Activated naive CD4-positive, alpha-beta T cell treated with anti-CD3 and anti-CD28 coated beads for 36 hours (primary cell): ENCODE measurements at regions of chr5 and their contacts with region 1.

Region 1: DNA sequence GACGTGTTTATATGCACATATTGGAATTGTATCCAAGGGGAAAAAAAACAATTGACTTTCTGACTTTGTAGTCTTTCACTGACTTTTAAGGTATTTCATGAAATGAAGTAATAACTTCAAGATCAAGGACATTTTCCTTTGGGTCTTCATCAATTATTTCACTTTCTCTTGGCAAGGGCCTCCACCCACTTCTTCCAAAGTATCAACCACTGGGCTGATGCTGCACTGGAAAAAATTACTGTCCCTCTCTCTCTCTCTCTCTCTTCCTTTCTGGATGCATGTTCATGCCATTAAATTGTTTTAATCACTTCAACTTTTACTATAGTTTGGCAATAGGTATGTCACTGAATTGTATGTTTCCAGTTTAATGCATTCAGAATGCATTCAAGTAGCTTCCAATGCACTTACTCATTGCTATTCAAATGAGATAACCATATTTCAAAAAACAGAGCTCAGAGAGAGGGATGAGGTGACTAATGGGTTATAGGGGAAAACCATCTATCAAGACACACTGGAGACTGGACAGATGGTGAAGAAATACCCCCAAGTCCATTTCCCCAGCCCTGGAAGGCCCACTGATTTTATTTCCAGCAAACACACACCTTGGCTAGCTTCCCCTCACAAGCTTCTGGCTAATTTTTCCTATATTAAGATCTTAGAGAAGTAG is 585.3 kb downstream of the EBF1 start:
- DNase-seq: no peak
- H3K4me3 Mint-ChIP-seq: no peak overlapping the region
- H3K27ac Mint-ChIP-seq: peak overlapping the region; percentile 47
- H3K4me1 Mint-ChIP-seq: peaks cover 29% of the 10 kb centered on the region
- H3K27me3 Mint-ChIP-seq: no peaks in the 10 kb centered on the region

Region 2: DNA sequence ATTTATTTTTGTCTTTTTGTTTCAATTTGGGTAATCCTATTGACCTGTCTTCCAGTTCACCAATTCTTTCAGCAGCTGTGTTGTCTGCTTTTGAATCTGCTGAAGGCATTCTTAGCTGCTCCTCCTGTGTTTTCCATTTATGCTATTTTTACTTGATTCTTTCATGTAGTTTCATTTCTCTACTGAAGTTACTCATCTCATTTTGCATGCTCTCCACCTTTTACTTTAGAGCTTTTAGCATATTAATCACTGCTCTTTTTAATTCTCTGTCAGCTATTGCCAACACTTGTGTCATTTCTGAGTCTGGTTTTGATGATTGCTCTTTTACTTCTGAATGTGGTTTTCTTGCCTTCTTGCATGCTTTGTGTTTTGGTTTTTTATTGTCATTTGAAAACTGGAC is 159.5 kb before region 1 on chr5:
- CTCF ChIA-PET with region 1: no interaction called
- intact Hi-C with region 1: loop called (anchors 1 kb)
- DNase-seq: no peak
- H3K4me3 Mint-ChIP-seq: no peak overlapping the region
- H3K27ac Mint-ChIP-seq: peak overlapping the region; percentile 46
- H3K4me1 Mint-ChIP-seq: peaks cover 16% of the 10 kb centered on the region
- H3K27me3 Mint-ChIP-seq: no peaks in the 10 kb centered on the region

Region 3: GRCh38 chr5:158435161-158435616 is 79.3 kb before region 1 on chr5:
- CTCF ChIA-PET with region 1: interaction called, 3 read pairs
- intact Hi-C with region 1: loop called (anchors 2 kb)
- DNase-seq: peak; percentile 50
- H3K4me3 Mint-ChIP-seq: no peak overlapping the region
- H3K27ac Mint-ChIP-seq: peak overlapping the region; percentile 57
- H3K4me1 Mint-ChIP-seq: peaks cover 62% of the 10 kb centered on the region
- H3K27me3 Mint-ChIP-seq: no peaks in the 10 kb centered on the region

Region 4: DNA sequence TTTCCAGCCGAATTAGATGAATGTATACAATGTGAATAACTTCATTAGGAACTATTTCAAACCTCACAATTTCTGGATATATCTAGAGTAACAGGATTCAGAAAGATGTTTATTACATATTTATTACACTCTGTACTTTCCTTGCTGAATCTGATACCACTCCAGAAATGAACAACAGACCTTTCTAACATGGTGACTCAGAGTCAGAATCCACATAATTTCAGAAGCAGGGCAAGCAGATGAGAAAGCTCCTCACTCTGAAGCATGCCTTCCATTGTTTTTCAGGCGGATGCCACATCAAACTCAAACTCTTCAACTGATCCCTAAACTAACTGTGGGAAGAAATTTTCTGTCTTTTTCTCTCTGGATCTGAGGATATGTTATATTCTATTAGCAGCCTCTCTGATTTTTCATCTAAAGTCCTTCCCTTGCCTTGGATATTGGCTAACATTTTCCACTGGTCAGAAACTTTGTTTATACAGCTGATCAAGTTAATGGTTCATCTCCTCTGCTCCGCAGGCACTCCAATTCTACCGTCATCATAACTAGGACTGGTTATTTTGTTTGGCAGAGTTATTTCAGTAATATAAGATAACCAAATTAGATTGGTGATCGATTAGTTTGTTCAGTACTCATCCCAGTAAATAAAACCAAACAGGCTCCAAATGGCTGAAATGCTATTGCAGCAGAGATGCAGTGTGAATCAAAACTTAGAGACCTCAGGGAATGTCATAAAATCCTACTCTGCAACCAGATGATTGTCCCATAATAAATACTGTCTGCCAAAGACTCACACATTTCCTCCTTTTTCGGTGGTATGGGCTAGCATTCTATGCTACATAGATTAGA is 29.3 kb after region 1 on chr5:
- CTCF ChIA-PET with region 1: interaction called, 7 read pairs
- intact Hi-C with region 1: loop called (anchors 1 kb)
- DNase-seq: peak; percentile 18
- H3K4me3 Mint-ChIP-seq: no peak overlapping the region
- H3K27ac Mint-ChIP-seq: no peak overlapping the region
- H3K4me1 Mint-ChIP-seq: peaks cover 39% of the 10 kb centered on the region
- H3K27me3 Mint-ChIP-seq: no peaks in the 10 kb centered on the region